ENCODE measurements at regions of chr2 and their contacts with region 1.

Region 1: GRCh38 chr2:218168635-218169462 is 2.1 kb upstream of the CXCR1 start:
- DNase-seq: peak; percentile 43 to 79 (median 58)
- ATAC-seq: peak; percentile 35
- H3K4me3 ChIP-seq: no peak overlapping the region
- H3K4me3 Mint-ChIP-seq: no peak overlapping the region
- H3K27ac ChIP-seq: no peak overlapping the region
- H3K27ac Mint-ChIP-seq: no peak overlapping the region
- H3K4me1 ChIP-seq: peaks cover 28% of the 10 kb centered on the region
- H3K4me1 Mint-ChIP-seq: peaks cover 33% of the 10 kb centered on the region
- H3K27me3 ChIP-seq: no peaks in the 10 kb centered on the region
- H3K27me3 Mint-ChIP-seq: peaks cover 6% of the 10 kb centered on the region
- CTCF ChIP-seq: peak; percentile 70

Region 2: GRCh38 chr2:218202266-218202665 is 33.4 kb after region 1 on chr2:
- CTCF ChIA-PET with region 1: no interaction called
- POLR2A ChIA-PET with region 1: no interaction called
- intact Hi-C with region 1: no loop called
- DNase-seq: no peak
- ATAC-seq: no peak
- H3K4me3 ChIP-seq: no peak overlapping the region
- H3K4me3 Mint-ChIP-seq: no peak overlapping the region
- H3K27ac ChIP-seq: no peak overlapping the region
- H3K27ac Mint-ChIP-seq: no peak overlapping the region
- H3K4me1 ChIP-seq: no peaks in the 10 kb centered on the region
- H3K4me1 Mint-ChIP-seq: no peaks in the 10 kb centered on the region
- H3K27me3 ChIP-seq: peaks cover 0 to 2% of the 10 kb centered on the region in 2 experiments
- H3K27me3 Mint-ChIP-seq: no peaks in the 10 kb centered on the region
- CTCF ChIP-seq: no peak

Region 3: GRCh38 chr2:218245214-218245613 is 76.4 kb after region 1 on chr2:
- CTCF ChIA-PET with region 1: no interaction called
- POLR2A ChIA-PET with region 1: no interaction called
- intact Hi-C with region 1: no loop called
- DNase-seq: no peak
- ATAC-seq: no peak
- H3K4me3 ChIP-seq: no peak overlapping the region
- H3K4me3 Mint-ChIP-seq: no peak overlapping the region
- H3K27ac ChIP-seq: no peak overlapping the region
- H3K27ac Mint-ChIP-seq: peak overlapping the region; percentile 61
- H3K4me1 ChIP-seq: peaks cover 2% of the 10 kb centered on the region
- H3K4me1 Mint-ChIP-seq: peaks cover 24% of the 10 kb centered on the region
- H3K27me3 ChIP-seq: no peaks in the 10 kb centered on the region
- H3K27me3 Mint-ChIP-seq: no peaks in the 10 kb centered on the region
- CTCF ChIP-seq: no peak

Region 4: GRCh38 chr2:218257390-218257981 is 88.6 kb after region 1 on chr2:
- CTCF ChIA-PET with region 1: no interaction called
- POLR2A ChIA-PET with region 1: no interaction called
- intact Hi-C with region 1: loop called in 1 of 2 experiments (anchors 5 kb)
- DNase-seq: peak; percentile 43 to 84 (median 58)
- ATAC-seq: peak; percentile 80
- H3K4me3 ChIP-seq: no peak overlapping the region
- H3K4me3 Mint-ChIP-seq: peak overlapping the region; percentile 51
- H3K27ac ChIP-seq: peak overlapping the region; percentile 56 to 67
- H3K27ac Mint-ChIP-seq: peak overlapping the region; percentile 91
- H3K4me1 ChIP-seq: peaks cover 22% of the 10 kb centered on the region
- H3K4me1 Mint-ChIP-seq: peaks cover 22% of the 10 kb centered on the region
- H3K27me3 ChIP-seq: no peaks in the 10 kb centered on the region
- H3K27me3 Mint-ChIP-seq: no peaks in the 10 kb centered on the region
- CTCF ChIP-seq: peak; percentile 64